Mucosa of descending colon (tissue), 3 donors: ENCODE measurements at regions of chr11 and their contacts with region 1.

Region 1: DNA sequence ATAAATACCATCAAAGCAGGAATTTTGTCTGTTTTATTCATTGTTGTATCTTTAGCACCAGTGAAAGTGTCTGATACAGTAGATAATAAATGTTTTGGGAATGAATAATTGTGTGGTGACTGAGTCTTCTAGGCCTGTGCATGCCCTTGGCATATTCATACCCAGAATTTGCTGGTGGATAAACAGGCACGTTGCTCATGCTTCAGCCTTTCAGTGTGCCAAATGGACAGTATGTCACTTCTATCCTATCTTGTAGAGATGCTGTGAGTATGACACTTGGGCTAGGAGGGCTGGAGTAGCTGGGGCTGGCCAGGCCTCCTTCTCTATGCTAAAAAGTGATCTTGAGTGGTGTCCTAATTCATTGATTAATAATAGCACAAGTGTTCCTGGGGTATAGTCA is 287.3 kb upstream of the DDI1 start:
- DNase-seq: no peak
- ATAC-seq: no peak
- H3K4me3 ChIP-seq: no peak overlapping the region
- H3K4me1 ChIP-seq: no peaks in the 10 kb centered on the region
- CTCF ChIP-seq: no peak

Region 2: GRCh38 chr11:103619480-103619879 is 129.7 kb before region 1 on chr11:
- intact Hi-C with region 1: no loop called
- DNase-seq: no peak
- ATAC-seq: no peak
- H3K4me3 ChIP-seq: no peak overlapping the region
- H3K4me1 ChIP-seq: no peaks in the 10 kb centered on the region
- CTCF ChIP-seq: no peak

Region 3: DNA sequence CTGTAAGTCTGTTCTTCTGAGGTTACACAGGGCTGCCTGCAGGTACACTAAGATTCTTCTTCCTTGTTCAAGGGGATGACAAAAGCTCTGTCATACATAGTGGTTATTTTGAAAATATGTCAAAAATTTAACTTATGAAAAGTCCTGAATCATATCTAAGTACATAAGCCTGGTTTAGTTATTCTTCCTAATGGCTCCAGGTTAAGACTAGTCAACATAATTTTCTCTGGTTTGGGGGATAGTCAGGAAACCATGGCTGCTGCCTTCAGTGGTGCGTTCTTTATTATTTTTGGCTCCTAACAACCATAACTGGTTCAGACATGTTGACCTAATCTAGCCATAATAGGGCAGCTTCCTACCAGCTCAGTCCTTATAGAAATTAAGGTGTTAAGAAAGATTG is 29.9 kb after region 1 on chr11:
- intact Hi-C with region 1: loop called in 1 of 2 experiments (anchors 2 kb)
- DNase-seq: no peak
- ATAC-seq: no peak
- H3K4me3 ChIP-seq: no peak overlapping the region
- H3K4me1 ChIP-seq: no peaks in the 10 kb centered on the region
- CTCF ChIP-seq: no peak

Region 4: GRCh38 chr11:104653406-104653805 is 904.2 kb after region 1 on chr11:
- intact Hi-C with region 1: no loop called
- DNase-seq: peak in 1 of 3 donors; percentile 5
- ATAC-seq: peak; percentile 26
- H3K4me3 ChIP-seq: no peak overlapping the region
- H3K4me1 ChIP-seq: no peaks in the 10 kb centered on the region
- CTCF ChIP-seq: no peak